ENCODE measurements at regions of chr5 and their contacts with region 1.

Region 1: GRCh38 chr5:64634997-64635686 is 55.2 kb upstream of the SHISAL2B start:
- DNase-seq: no peak
- H3K4me3 ChIP-seq: no peak overlapping the region
- H3K27ac ChIP-seq: no peak overlapping the region
- H3K4me1 ChIP-seq: no peaks in the 10 kb centered on the region
- H3K27me3 ChIP-seq: no peaks in the 10 kb centered on the region
- CTCF ChIP-seq: peak; percentile 30 to 84 (median 48)
- EP300 ChIP-seq: no peak
- POLR2A ChIP-seq: no peak

Region 2: GRCh38 chr5:64784451-64785025 is 149.4 kb after region 1 on chr5:
- intact Hi-C with region 1: loop called (anchors 1 kb)
- DNase-seq: peak; percentile 78
- H3K4me3 ChIP-seq: no peak overlapping the region
- H3K27ac ChIP-seq: no peak overlapping the region
- H3K4me1 ChIP-seq: no peaks in the 10 kb centered on the region
- H3K27me3 ChIP-seq: no peaks in the 10 kb centered on the region
- CTCF ChIP-seq: peak; percentile 39 to 79 (median 69)
- EP300 ChIP-seq: no peak
- POLR2A ChIP-seq: no peak

Measured in sigmoid colon (tissue), 7 donors.